Activated naive CD4-positive, alpha-beta T cell treated with anti-CD3 and anti-CD28 coated beads for 36 hours (primary cell): ENCODE measurements at regions of chrX and their contacts with region 1.

Region 1: DNA sequence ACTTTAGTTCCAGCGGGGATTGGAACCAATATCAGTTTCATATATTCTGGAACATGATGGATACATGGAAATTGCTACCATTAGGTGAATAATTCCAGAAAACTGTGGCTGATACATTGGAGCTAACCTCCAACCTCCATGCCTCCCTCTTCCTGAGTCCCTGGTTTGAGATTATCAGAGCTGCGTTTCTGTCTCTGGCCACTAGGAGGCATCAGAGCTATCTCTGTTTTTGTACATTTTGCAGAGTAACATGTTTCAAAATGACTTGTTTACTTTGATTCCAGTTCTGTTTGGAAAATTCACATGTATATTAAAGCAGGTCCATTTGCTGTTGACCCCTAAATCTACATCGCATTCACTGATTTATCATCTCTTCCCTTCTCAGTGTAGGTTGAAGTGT is 2.4 kb upstream of the RAB40AL start:
- DNase-seq: peak; percentile 53
- H3K4me3 Mint-ChIP-seq: no peak overlapping the region
- H3K27ac Mint-ChIP-seq: no peak overlapping the region
- H3K4me1 Mint-ChIP-seq: no peaks in the 10 kb centered on the region
- H3K27me3 Mint-ChIP-seq: no peaks in the 10 kb centered on the region

Region 2: DNA sequence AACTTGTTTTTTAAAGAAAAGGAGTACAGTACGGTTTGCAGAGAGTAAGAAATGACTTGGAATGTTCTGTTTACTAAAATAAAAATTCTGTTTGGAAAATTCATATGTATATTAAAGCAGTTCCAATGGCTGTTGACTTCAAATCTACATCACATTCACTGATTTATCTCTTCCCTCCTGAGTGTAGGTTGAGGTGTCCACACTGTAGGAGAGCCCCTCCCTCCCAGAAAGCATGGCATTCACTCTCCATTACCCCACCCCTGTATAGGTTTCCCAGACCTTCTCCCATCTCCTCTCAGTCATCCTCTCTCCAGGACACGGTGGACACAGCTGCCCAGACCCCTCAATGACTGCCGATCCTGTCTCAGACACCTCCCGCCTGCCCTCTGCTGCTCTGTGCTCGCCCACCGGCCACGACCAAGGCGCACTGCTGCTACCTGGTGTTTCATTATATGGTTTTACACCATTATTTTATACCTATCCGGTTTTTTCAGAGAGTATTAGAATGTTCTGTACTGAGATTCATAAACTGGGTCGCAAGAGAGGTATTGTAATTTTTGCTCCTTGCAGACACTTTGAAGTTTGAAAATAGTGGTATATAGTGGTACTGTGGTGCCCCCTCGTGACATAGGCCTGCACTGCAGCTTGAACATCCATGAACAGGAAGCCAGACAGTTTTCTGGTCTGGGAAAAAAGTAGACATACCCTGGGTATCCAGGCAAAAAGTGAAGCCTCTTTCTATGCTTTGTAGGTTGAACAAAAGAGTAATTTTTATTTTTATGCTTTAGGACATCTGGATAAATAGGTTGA is 241.5 kb after region 1 on chrX:
- CTCF ChIA-PET with region 1: interaction called, 3 read pairs
- intact Hi-C with region 1: loop called (anchors 1 kb)
- DNase-seq: peak; percentile 75
- H3K4me3 Mint-ChIP-seq: peak overlapping the region; percentile 20
- H3K27ac Mint-ChIP-seq: no peak overlapping the region
- H3K4me1 Mint-ChIP-seq: peaks cover 3% of the 10 kb centered on the region
- H3K27me3 Mint-ChIP-seq: peaks cover 3% of the 10 kb centered on the region